ENCODE measurements at regions of chr18 and their contacts with region 1.

Region 1: GRCh38 chr18:31819106-31819924 is 58.6 kb upstream of the SLC25A52 start:
- DNase-seq: peak; percentile 64
- H3K4me3 Mint-ChIP-seq: no peak overlapping the region
- H3K27ac Mint-ChIP-seq: no peak overlapping the region
- H3K4me1 Mint-ChIP-seq: no peaks in the 10 kb centered on the region
- H3K27me3 Mint-ChIP-seq: peaks cover 9% of the 10 kb centered on the region

Region 2: DNA sequence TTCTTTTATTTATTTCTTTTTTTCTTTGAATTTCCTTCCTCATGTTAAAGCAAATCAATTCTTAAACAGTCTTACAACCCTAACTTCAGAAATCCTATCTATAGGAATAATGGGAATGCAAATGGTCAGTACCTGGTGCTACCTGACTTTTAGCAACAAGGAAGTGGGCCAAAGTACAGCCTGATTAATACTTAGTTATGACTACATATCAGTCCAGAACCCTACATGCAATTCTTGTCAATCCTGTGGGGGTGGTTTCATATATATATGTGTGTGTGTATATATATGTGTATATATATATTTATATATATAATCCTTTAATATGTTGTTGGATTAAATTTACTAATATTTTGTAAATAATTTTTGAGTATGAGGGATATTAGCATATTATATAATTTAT is 138.4 kb after region 1 on chr18:
- intact Hi-C with region 1: loop called (anchors 1 kb)
- DNase-seq: no peak
- H3K4me3 Mint-ChIP-seq: no peak overlapping the region
- H3K27ac Mint-ChIP-seq: no peak overlapping the region
- H3K4me1 Mint-ChIP-seq: no peaks in the 10 kb centered on the region
- H3K27me3 Mint-ChIP-seq: no peaks in the 10 kb centered on the region

Measured in activated CD4-positive, alpha-beta T cell treated with anti-CD3 and anti-CD28 coated beads, Interleukin-2, amount 10 ng/mL, durations not matched to agents 24 days and 14 days (primary cell).